Activated CD4-positive, alpha-beta T cell treated with anti-CD3 and anti-CD28 coated beads for 36 hours (primary cell): ENCODE measurements at regions of chr18 and their contacts with region 1.

Region 1: GRCh38 chr18:24413148-24413547 is 13.3 kb upstream of the IMPACT start:
- DNase-seq: no peak
- ATAC-seq: no peak
- H3K4me3 Mint-ChIP-seq: no peak overlapping the region
- H3K27ac Mint-ChIP-seq: no peak overlapping the region
- H3K4me1 Mint-ChIP-seq: peaks cover 28% of the 10 kb centered on the region
- H3K27me3 Mint-ChIP-seq: peaks cover 31% of the 10 kb centered on the region

Region 2: GRCh38 chr18:23994361-23994902 is 418.7 kb before region 1 on chr18:
- CTCF ChIA-PET with region 1: no interaction called
- POLR2A ChIA-PET with region 1: no interaction called
- intact Hi-C with region 1: no loop called
- DNase-seq: peak; percentile 27
- ATAC-seq: no peak
- H3K4me3 Mint-ChIP-seq: no peak overlapping the region
- H3K27ac Mint-ChIP-seq: no peak overlapping the region
- H3K4me1 Mint-ChIP-seq: peaks cover 45% of the 10 kb centered on the region
- H3K27me3 Mint-ChIP-seq: peaks cover 2% of the 10 kb centered on the region

Region 3: DNA sequence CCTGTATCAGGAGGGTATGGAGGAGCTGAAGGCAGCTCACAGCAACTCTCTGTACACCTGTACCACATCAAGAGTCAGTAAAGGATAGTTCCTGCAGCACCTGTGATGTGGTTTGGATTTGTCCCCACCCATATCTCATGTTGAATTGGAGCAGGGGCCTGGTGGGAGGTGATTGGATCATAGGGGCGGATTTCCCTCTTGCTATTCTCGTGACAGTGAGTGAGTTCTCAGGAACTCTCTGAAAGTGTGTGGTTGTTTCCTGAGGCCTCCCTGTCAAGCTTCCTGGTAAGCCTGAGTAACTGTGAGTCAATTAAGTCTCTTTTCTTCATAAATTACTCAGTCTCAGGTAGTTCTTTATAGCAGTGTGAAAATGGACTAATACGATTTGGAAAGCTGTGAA is 44.4 kb before region 1 on chr18:
- CTCF ChIA-PET with region 1: interaction called, 19 read pairs
- POLR2A ChIA-PET with region 1: interaction called, 9 read pairs
- intact Hi-C with region 1: loop called in 1 of 2 experiments (anchors 1 kb)
- DNase-seq: peak; percentile 77
- ATAC-seq: peak; percentile 88
- H3K4me3 Mint-ChIP-seq: peak overlapping the region; percentile 22
- H3K27ac Mint-ChIP-seq: peak overlapping the region; percentile 77
- H3K4me1 Mint-ChIP-seq: peaks cover 28% of the 10 kb centered on the region
- H3K27me3 Mint-ChIP-seq: peaks cover 3% of the 10 kb centered on the region

Region 4: DNA sequence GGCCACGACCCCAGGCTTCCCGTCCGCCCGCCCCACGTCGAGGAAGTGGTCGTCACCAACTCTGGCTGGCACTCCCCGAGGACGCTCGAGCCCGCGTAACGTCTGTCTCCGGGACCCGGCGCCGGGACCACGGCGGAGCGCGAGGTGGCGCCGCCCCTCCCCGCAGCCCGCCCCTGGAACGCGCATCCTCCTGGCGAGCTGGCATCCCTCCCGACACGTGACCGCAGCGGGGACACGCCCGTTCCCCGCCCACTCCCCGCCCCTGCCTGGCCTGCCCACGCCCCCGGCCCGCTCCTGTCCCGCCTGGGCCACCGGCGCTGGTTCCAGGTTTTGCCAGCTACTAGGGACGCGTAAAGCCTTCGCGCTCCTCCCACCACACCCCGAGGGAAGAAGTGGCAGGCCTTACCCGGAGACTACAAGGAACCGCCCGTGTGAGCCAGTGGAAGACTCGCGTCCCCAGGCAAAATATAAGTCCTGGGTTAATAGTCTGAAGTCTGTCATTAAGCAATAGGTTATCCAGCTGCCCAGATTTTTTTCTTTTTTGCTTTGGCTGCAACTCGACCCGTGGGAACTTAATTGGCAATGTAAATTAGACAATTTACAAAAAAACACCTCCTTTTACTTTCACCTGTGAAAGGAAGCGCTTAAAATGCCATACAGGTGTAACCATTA is 15.3 kb before region 1 on chr18 and contains the start of gene OSBPL1A:
- CTCF ChIA-PET with region 1: interaction called, 5 read pairs
- POLR2A ChIA-PET with region 1: interaction called, 5 read pairs
- intact Hi-C with region 1: loop called in 1 of 2 experiments (anchors 2 kb)
- DNase-seq: peak; percentile 88
- ATAC-seq: peak; percentile 86
- H3K4me3 Mint-ChIP-seq: peak within 1 kb of the TSS; percentile 76
- H3K27ac Mint-ChIP-seq: peak within 1 kb of the TSS; percentile 59
- H3K4me1 Mint-ChIP-seq: peaks cover 28% of the 10 kb centered on the region
- H3K27me3 Mint-ChIP-seq: peaks cover 16% of the 10 kb centered on the region
- total RNA-seq, gene OSBPL1A: 2.9 to 3.4 TPM

Region 5: GRCh38 chr18:24426398-24427294 is 13.5 kb after region 1 on chr18 and contains the start of gene IMPACT:
- CTCF ChIA-PET with region 1: interaction called, 3 read pairs
- POLR2A ChIA-PET with region 1: interaction called, 3 read pairs
- intact Hi-C with region 1: loop called (anchors 1 to 2 kb)
- DNase-seq: peak; percentile 86
- ATAC-seq: peak; percentile 94
- H3K4me3 Mint-ChIP-seq: peak within 1 kb of the TSS; percentile 85
- H3K27ac Mint-ChIP-seq: peak within 1 kb of the TSS; percentile 90
- H3K4me1 Mint-ChIP-seq: peaks cover 29% of the 10 kb centered on the region
- H3K27me3 Mint-ChIP-seq: peaks cover 19% of the 10 kb centered on the region
- total RNA-seq, gene IMPACT: 15.4 to 18.3 TPM

Region 6: GRCh38 chr18:24456549-24456948 is 43.4 kb after region 1 on chr18:
- CTCF ChIA-PET with region 1: no interaction called
- POLR2A ChIA-PET with region 1: no interaction called
- intact Hi-C with region 1: loop called (anchors 1 to 5 kb)
- DNase-seq: no peak
- ATAC-seq: peak; percentile 81
- H3K4me3 Mint-ChIP-seq: no peak overlapping the region
- H3K27ac Mint-ChIP-seq: no peak overlapping the region
- H3K4me1 Mint-ChIP-seq: peaks cover 23% of the 10 kb centered on the region
- H3K27me3 Mint-ChIP-seq: no peaks in the 10 kb centered on the region

Region 7: DNA sequence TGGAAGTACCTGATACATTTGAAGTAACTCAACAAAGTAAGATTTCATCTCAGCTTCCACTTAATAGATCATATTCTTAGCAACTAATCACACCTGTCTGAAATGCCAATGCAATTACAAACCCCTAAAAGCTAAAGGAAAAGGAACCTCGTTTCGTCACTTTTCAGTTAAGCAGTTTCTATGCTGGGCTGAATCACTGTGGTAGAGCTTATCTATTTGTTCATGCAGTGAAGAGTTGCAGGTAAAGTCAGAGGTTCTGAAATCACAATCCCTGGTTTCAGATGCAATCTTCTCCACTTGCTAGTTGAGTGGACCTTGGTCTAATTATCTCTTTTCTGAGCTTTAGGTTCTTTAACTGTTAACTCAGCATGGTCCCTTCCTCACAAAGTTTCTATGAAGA is 53.6 kb after region 1 on chr18:
- CTCF ChIA-PET with region 1: no interaction called
- POLR2A ChIA-PET with region 1: no interaction called
- intact Hi-C with region 1: no loop called
- DNase-seq: no peak
- ATAC-seq: no peak
- H3K4me3 Mint-ChIP-seq: no peak overlapping the region
- H3K27ac Mint-ChIP-seq: no peak overlapping the region
- H3K4me1 Mint-ChIP-seq: peaks cover 10% of the 10 kb centered on the region
- H3K27me3 Mint-ChIP-seq: peaks cover 6% of the 10 kb centered on the region

Region 8: GRCh38 chr18:24672165-24672941 is 259.2 kb after region 1 on chr18:
- CTCF ChIA-PET with region 1: no interaction called
- POLR2A ChIA-PET with region 1: no interaction called
- intact Hi-C with region 1: loop called in 1 of 2 experiments (anchors 5 kb)
- DNase-seq: no peak
- ATAC-seq: no peak
- H3K4me3 Mint-ChIP-seq: no peak overlapping the region
- H3K27ac Mint-ChIP-seq: no peak overlapping the region
- H3K4me1 Mint-ChIP-seq: peaks cover 11% of the 10 kb centered on the region
- H3K27me3 Mint-ChIP-seq: peaks cover 15% of the 10 kb centered on the region

Region 9: GRCh38 chr18:24995056-24995455 is 581.9 kb after region 1 on chr18:
- CTCF ChIA-PET with region 1: no interaction called
- POLR2A ChIA-PET with region 1: no interaction called
- intact Hi-C with region 1: no loop called
- DNase-seq: no peak
- ATAC-seq: no peak
- H3K4me3 Mint-ChIP-seq: no peak overlapping the region
- H3K27ac Mint-ChIP-seq: no peak overlapping the region
- H3K4me1 Mint-ChIP-seq: no peaks in the 10 kb centered on the region
- H3K27me3 Mint-ChIP-seq: no peaks in the 10 kb centered on the region